Activated CD8-positive, alpha-beta memory T cell treated with anti-CD3 and anti-CD28 coated beads, Interleukin-2, amount 10 ng/mL, durations not matched to agents 7 days and 5 days (primary cell): ENCODE measurements at regions of chr3 and their contacts with region 1.

Region 1: GRCh38 chr3:16264708-16265454 is at the starts of genes DPH3 and OXNAD1:
- DNase-seq: peak; percentile 100
- ATAC-seq: peak; percentile 96
- H3K4me3 Mint-ChIP-seq: peak within 1 kb of the TSS; percentile 84
- H3K27ac Mint-ChIP-seq: peak within 1 kb of the TSS; percentile 97
- H3K4me1 Mint-ChIP-seq: peaks cover 37% of the 10 kb centered on the region
- H3K27me3 Mint-ChIP-seq: no peaks in the 10 kb centered on the region
- total RNA-seq, gene DPH3: 13.9 to 23.8 TPM
- total RNA-seq, gene OXNAD1: 44.9 to 47.4 TPM

Region 2: GRCh38 chr3:16280671-16281070 is 15.8 kb after region 1 on chr3:
- CTCF ChIA-PET with region 1: interaction called, 33 read pairs
- DNase-seq: no peak
- ATAC-seq: no peak
- H3K4me3 Mint-ChIP-seq: no peak overlapping the region
- H3K27ac Mint-ChIP-seq: no peak overlapping the region
- H3K4me1 Mint-ChIP-seq: peaks cover 14% of the 10 kb centered on the region
- H3K27me3 Mint-ChIP-seq: no peaks in the 10 kb centered on the region

Region 3: DNA sequence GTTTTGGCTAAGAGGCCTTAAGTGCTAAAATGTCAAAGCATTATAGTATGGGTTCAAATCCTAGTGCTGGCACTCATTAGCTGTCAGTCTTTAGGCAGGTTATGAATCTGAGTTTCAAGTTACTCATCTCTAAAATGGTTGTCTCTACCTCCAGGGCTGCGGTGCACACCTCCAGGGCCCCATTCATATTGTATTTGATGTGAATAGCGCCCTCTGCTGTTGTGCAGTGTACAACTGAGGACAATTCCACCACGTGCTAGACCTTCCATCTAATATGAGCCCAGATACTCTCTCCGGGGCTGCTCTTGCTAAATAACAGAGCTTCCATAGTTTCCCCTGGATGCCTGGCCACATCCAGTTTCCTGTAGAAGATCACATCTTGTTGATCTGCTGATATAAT is 54.4 kb after region 1 on chr3:
- CTCF ChIA-PET with region 1: interaction called, 58 read pairs
- DNase-seq: peak; percentile 92
- ATAC-seq: peak; percentile 93
- H3K4me3 Mint-ChIP-seq: no peak overlapping the region
- H3K27ac Mint-ChIP-seq: peak overlapping the region; percentile 74
- H3K4me1 Mint-ChIP-seq: peaks cover 59% of the 10 kb centered on the region
- H3K27me3 Mint-ChIP-seq: no peaks in the 10 kb centered on the region

Region 4: GRCh38 chr3:16550676-16551341 is 285.9 kb after region 1 on chr3:
- CTCF ChIA-PET with region 1: interaction called, 18 read pairs
- DNase-seq: peak; percentile 85
- ATAC-seq: peak; percentile 98
- H3K4me3 Mint-ChIP-seq: no peak overlapping the region
- H3K27ac Mint-ChIP-seq: peak overlapping the region; percentile 78
- H3K4me1 Mint-ChIP-seq: peaks cover 13% of the 10 kb centered on the region
- H3K27me3 Mint-ChIP-seq: peaks cover 6% of the 10 kb centered on the region